ENCODE measurements at regions of chr1 and their contacts with region 1.

Region 1: DNA sequence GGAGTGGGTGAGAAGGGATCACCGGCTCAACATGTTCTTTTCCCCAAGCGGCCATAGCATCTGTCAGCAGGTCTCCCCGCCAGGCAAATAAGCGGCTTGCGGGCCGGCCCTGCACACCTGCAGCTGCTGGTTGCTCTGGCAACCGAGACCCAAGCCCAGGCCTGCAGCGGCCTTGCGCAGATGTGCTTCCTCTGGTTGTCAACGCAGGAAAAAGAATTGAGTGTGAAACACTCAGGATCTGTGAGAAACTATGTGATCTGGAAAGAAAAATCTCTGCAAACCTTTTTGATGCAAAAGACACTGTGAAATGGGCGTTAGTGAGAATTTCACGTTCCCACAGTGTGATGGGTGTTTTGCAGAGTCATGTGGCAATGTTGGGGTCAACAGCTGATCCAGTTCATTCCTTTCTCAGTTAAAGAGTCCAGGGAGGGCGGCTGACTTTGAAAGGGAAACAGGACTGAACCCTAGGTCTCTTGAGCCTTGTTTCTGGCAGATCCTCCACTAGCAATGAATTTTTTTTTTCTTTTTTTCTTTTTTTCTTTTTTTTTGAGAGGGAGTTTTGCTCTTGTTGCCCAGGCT is 28.4 kb downstream of the TOMM20 start:
- DNase-seq: no peak
- ATAC-seq: no peak
- H3K4me3 Mint-ChIP-seq: no peak overlapping the region
- H3K27ac Mint-ChIP-seq: no peak overlapping the region
- H3K4me1 Mint-ChIP-seq: peaks cover 30% of the 10 kb centered on the region
- H3K27me3 Mint-ChIP-seq: peaks cover 4% of the 10 kb centered on the region

Region 2: DNA sequence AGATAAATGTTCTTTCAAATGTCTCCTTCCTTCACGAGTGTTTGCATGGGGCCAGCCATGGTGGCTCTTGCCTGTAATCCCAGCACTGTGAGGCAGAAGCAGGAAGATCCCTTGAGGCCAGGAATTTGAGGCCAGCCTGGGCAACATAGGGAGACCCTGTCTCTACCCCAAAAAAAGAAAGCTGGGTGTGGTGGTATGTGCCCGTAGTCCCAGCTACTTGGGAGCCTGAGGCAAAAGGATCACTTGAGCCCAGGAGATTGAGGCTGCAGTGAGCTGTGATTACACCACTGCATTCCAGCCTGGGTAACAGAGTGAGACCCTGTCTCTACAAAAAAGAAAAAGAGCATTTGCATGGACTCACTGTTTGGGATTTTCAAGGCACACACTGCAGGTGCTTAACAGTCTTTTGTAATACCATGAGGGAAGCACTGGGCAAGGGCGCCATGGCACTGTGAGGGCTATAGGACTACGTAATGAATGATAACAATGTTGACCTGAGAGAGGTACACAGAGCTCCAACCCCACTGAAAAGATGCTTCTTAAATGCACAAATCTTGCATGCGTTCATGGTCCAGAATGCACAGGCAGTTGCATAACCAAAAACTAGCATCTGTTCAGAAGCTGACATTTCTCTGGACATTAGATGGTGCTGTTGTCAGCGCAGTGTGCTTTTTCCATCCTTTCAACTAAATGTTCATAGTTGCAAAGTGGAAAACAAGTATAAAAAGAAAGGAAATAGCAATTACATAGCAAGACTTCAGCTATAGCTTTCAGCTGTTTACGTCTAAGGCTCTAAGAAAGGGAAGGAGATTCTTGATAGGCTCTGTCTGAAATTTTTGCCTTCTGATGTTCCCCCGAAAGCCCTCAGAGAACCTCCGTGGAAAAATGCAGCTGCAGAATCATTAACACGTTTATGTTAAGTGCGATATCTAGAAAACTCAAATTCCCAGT is 613.5 kb before region 1 on chr1:
- CTCF ChIA-PET with region 1: interaction called, 3 read pairs
- POLR2A ChIA-PET with region 1: no interaction called
- intact Hi-C with region 1: loop called in 1 of 2 experiments (anchors 5 kb)
- DNase-seq: peak; percentile 61
- ATAC-seq: peak; percentile 16
- H3K4me3 Mint-ChIP-seq: no peak overlapping the region
- H3K27ac Mint-ChIP-seq: peak overlapping the region; percentile 98
- H3K4me1 Mint-ChIP-seq: peaks cover 43% of the 10 kb centered on the region
- H3K27me3 Mint-ChIP-seq: peaks cover 16% of the 10 kb centered on the region

Region 3: GRCh38 chr1:235206533-235207208 is 106.4 kb after region 1 on chr1:
- CTCF ChIA-PET with region 1: no interaction called
- POLR2A ChIA-PET with region 1: no interaction called
- intact Hi-C with region 1: loop called in 1 of 2 experiments (anchors 5 kb)
- DNase-seq: peak; percentile 25
- ATAC-seq: peak; percentile 98
- H3K4me3 Mint-ChIP-seq: peak overlapping the region; percentile 12
- H3K27ac Mint-ChIP-seq: peak overlapping the region; percentile 92
- H3K4me1 Mint-ChIP-seq: peaks cover 29% of the 10 kb centered on the region
- H3K27me3 Mint-ChIP-seq: no peaks in the 10 kb centered on the region

Region 4: GRCh38 chr1:236058141-236058934 is 958.1 kb after region 1 on chr1:
- CTCF ChIA-PET with region 1: no interaction called
- POLR2A ChIA-PET with region 1: no interaction called
- intact Hi-C with region 1: no loop called
- DNase-seq: no peak
- ATAC-seq: peak; percentile 69
- H3K4me3 Mint-ChIP-seq: no peak overlapping the region
- H3K27ac Mint-ChIP-seq: no peak overlapping the region
- H3K4me1 Mint-ChIP-seq: peaks cover 7% of the 10 kb centered on the region
- H3K27me3 Mint-ChIP-seq: peaks cover 24% of the 10 kb centered on the region